ENCODE measurements at regions of chr2 and their contacts with region 1.

Region 1: DNA sequence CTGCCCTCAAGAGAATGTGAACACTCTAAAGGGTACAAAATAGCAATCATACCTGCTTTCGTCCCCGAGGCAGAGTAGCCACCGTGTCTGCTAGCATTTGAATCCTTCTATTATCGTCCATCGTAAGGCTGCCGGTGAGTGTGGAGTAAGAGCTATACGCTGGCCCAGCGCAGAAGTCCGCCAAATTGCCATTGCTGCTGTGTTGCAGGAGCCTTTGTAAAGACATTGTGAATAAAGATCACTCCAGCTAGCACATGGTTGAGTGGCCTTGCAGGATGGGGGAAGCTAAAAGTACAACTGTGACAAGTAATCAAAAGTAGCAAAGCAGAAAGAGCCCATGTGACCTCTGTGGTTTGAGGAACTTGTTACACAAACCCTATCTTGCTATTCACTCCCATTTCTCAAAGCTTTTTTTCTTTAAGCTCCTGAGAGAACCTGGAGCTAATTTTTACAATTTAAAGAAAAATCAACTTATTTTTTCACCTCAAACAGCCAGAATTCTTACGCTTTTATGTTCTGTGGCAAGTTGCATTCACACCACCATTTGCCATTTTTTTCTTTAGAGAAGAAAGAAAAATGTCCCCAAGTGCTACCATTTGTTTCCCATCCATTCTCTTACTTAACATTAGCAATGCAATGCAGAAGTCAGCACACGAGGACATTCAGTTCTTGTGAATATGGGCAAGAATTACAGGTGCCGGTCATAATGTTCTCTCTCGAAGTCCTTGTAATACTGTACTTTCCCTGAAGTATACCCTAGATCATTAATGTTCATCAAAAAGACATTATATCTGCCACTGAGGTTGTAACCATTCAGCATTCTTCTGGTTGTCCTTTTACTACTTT is at the start of gene CYTIP:
- DNase-seq: peak; percentile 82
- H3K4me3 Mint-ChIP-seq: peak within 1 kb of the TSS; percentile 92
- H3K27ac Mint-ChIP-seq: peak within 1 kb of the TSS; percentile 99
- H3K4me1 Mint-ChIP-seq: peaks cover 37% of the 10 kb centered on the region
- H3K27me3 Mint-ChIP-seq: peaks cover 2% of the 10 kb centered on the region
- total RNA-seq, gene CYTIP: 369 to 388 TPM

Region 2: GRCh38 chr2:157413326-157414035 is 30.5 kb before region 1 on chr2:
- CTCF ChIA-PET with region 1: interaction called, 5 read pairs
- POLR2A ChIA-PET with region 1: interaction called, 319 read pairs
- intact Hi-C with region 1: loop called (anchors 1 kb)
- DNase-seq: peak; percentile 75
- H3K4me3 Mint-ChIP-seq: peak overlapping the region; percentile 65
- H3K27ac Mint-ChIP-seq: peak overlapping the region; percentile 98
- H3K4me1 Mint-ChIP-seq: peaks cover 81% of the 10 kb centered on the region
- H3K27me3 Mint-ChIP-seq: peaks cover 2% of the 10 kb centered on the region

Region 3: GRCh38 chr2:157433394-157433793 is 10.6 kb before region 1 on chr2:
- CTCF ChIA-PET with region 1: interaction called, 9 read pairs
- POLR2A ChIA-PET with region 1: interaction called, 225 read pairs
- intact Hi-C with region 1: loop called (anchors 1 kb)
- DNase-seq: no peak
- H3K4me3 Mint-ChIP-seq: peak overlapping the region; percentile 92
- H3K27ac Mint-ChIP-seq: peak overlapping the region; percentile 99
- H3K4me1 Mint-ChIP-seq: peaks cover 69% of the 10 kb centered on the region
- H3K27me3 Mint-ChIP-seq: no peaks in the 10 kb centered on the region

Region 4: GRCh38 chr2:157468931-157469708 is 25.1 kb after region 1 on chr2:
- CTCF ChIA-PET with region 1: interaction called, 12 read pairs
- POLR2A ChIA-PET with region 1: interaction called, 201 read pairs
- intact Hi-C with region 1: loop called (anchors 1 kb)
- DNase-seq: no peak
- H3K4me3 Mint-ChIP-seq: peak overlapping the region; percentile 69
- H3K27ac Mint-ChIP-seq: peak overlapping the region; percentile 99
- H3K4me1 Mint-ChIP-seq: peaks cover 91% of the 10 kb centered on the region
- H3K27me3 Mint-ChIP-seq: no peaks in the 10 kb centered on the region